ENCODE measurements at regions of chr12 and their contacts with region 1.

Region 1: DNA sequence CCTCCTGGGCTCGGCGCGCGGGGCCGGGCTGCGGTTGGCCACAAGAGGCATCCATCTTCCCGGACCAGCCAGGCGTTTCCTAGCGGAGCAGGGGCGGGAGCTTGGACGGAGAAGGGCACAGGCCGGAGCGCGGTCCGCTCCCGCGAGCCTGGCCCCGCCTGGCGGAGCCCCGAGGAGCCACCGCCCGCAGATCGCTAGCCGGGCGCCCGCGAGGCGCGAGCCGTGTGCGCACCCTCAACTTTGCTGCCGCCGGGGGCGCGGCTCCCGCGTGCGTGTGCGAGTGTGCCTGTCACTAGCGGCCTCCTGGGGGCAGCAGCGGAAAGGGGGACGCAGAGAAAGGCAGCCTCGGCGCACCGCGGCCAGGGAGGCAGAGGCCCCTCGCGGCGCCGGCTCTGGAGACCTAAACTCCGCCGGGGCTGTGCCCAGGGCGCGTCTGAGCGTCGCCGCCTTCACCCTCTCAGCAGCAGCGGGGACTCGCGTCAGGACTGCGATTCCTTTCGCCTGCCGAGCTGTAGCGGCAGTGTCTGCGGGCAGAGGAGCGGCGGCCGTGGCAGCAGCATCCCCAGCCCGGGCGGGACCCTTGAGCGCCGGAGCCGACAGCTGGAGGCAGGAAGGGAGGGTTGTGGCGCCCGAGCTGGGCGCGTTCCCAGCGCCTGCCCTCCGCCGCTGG is 644 bp upstream of the SRGAP1 start:
- DNase-seq: peak; percentile 87
- ATAC-seq: peak; percentile 93
- H3K4me3 ChIP-seq: peak overlapping the region; percentile 79 to 98 (median 91)
- H3K27ac ChIP-seq: peak overlapping the region; percentile 65
- H3K4me1 ChIP-seq: peaks cover 38% of the 10 kb centered on the region
- H3K27me3 ChIP-seq: no peaks in the 10 kb centered on the region; a peak in 1 of 5 replicates
- CTCF ChIP-seq: peak; percentile 97
- EP300 ChIP-seq: no peak
- POLR2A ChIP-seq: peak in 1 of 2 experiments; percentile 73; a peak in 2 of 4 replicates
- RAD21 ChIP-seq: peak; percentile 100

Region 2: DNA sequence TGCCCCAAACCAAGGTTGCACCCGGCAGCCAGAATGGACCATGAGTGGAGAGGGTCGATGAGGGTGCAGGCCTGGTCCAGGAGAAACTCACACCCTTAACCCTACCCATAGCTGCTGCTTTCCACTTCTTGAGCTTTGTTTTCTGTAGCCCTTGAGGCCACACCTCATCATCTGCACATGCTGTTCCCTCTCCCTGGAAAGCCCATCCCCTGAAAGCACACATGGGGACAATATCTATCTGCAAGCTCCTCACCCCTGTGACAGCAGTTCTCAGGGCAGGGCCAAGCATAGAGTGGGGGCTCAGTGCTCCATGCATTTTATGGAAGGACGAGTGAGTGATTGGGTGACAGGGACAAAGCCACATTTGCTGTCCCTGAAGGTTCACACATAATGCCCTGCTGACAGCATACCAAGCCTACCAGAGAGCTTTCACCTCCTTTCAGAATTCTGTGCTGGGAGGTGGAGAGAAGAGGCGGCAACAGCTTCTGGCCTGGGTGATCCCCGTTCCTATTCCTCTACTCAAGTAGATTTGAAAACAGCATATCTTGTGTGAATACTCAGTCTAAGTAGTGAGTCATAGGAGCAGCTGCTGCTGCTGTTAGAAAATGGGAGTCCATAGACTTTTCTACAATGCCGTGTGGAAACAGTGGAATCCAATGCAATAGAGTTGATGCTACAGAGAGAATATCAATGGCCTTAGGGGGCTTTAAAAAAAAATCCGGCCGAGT is 45.2 kb after region 1 on chr12:
- CTCF ChIA-PET with region 1: no interaction called
- POLR2A ChIA-PET with region 1: interaction called, 10 read pairs
- in situ Hi-C with region 1: no loop called
- intact Hi-C with region 1: loop called (anchors 5 kb)
- DNase-seq: no peak
- ATAC-seq: peak; percentile 27
- H3K4me3 ChIP-seq: no peak overlapping the region
- H3K27ac ChIP-seq: peak overlapping the region; percentile 39
- H3K4me1 ChIP-seq: peaks cover 46% of the 10 kb centered on the region
- H3K27me3 ChIP-seq: no peaks in the 10 kb centered on the region
- CTCF ChIP-seq: no peak
- EP300 ChIP-seq: no peak
- POLR2A ChIP-seq: no peak
- RAD21 ChIP-seq: no peak

Region 3: GRCh38 chr12:63940310-63941005 is 96.6 kb after region 1 on chr12:
- CTCF ChIA-PET with region 1: no interaction called
- POLR2A ChIA-PET with region 1: interaction called, 3 read pairs
- in situ Hi-C with region 1: no loop called
- intact Hi-C with region 1: loop called (anchors 10 kb)
- DNase-seq: no peak
- ATAC-seq: no peak
- H3K4me3 ChIP-seq: no peak overlapping the region
- H3K27ac ChIP-seq: no peak overlapping the region
- H3K4me1 ChIP-seq: peaks cover 44% of the 10 kb centered on the region
- H3K27me3 ChIP-seq: no peaks in the 10 kb centered on the region
- CTCF ChIP-seq: no peak
- EP300 ChIP-seq: no peak
- POLR2A ChIP-seq: no peak
- RAD21 ChIP-seq: no peak

Region 4: DNA sequence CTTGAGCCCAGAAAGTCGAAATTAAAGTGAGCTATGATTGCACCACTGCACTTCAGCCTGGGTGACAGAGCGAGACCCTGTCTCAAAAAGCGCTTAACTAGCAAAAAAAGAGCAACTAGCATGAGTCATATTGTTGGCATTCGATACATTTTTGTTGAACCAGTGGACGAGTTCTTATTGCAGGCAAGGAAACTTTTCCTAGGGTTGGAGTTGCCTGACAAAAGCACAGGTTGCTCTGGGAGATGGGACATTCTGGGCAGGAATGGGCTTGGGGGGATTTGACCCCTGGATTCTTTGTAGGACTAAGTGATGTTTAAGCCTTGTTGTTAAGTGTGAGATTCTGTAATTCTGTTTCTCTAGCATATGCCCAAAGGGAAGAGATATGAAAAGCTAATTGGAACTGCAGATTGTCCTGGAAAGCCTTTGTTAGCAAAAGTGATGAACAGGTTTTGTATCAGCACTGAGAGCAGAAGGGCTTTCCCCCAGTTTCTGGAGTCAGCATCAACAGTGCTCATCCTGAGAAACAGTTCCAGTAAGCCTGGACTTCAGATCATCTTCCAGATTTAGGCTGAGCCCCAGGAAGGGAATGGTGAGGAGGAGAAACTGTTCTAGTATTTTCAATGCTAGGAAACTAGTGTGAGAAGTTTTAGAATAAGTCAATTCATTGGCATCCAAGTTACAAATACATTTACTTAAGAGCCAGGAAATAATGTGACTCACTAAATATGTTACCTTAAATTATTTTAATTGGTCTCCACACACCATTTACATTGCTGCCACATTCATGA is 123.7 kb after region 1 on chr12:
- CTCF ChIA-PET with region 1: no interaction called
- POLR2A ChIA-PET with region 1: no interaction called
- in situ Hi-C with region 1: no loop called
- intact Hi-C with region 1: no loop called
- DNase-seq: no peak
- ATAC-seq: no peak
- H3K4me3 ChIP-seq: no peak overlapping the region
- H3K27ac ChIP-seq: no peak overlapping the region
- H3K4me1 ChIP-seq: no peaks in the 10 kb centered on the region
- H3K27me3 ChIP-seq: no peaks in the 10 kb centered on the region
- CTCF ChIP-seq: no peak
- EP300 ChIP-seq: no peak
- POLR2A ChIP-seq: no peak
- RAD21 ChIP-seq: no peak

Region 5: DNA sequence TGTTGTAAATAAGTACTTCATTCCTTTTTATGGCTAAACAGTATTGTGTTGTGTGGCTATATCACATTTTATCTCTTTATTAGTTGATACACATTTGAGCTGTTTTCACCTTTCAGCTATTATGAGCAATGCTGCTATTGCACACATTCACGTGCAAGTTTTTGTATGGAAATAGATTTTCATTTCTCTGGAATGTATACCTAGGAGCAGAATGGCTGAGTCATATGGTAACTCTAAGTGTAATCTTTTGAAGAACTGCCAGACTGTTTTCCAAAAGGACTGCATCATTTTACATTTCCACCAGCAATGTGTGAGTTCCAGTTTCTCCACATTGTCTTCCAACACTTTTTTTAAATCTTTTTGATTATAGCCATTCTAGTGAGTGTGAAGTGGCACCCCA is 134.7 kb after region 1 on chr12:
- CTCF ChIA-PET with region 1: no interaction called
- POLR2A ChIA-PET with region 1: no interaction called
- in situ Hi-C with region 1: no loop called
- intact Hi-C with region 1: no loop called
- DNase-seq: peak; percentile 4
- ATAC-seq: no peak
- H3K4me3 ChIP-seq: no peak overlapping the region
- H3K27ac ChIP-seq: no peak overlapping the region
- H3K4me1 ChIP-seq: no peaks in the 10 kb centered on the region
- H3K27me3 ChIP-seq: no peaks in the 10 kb centered on the region
- CTCF ChIP-seq: no peak
- EP300 ChIP-seq: no peak
- POLR2A ChIP-seq: no peak
- RAD21 ChIP-seq: no peak

Region 6: DNA sequence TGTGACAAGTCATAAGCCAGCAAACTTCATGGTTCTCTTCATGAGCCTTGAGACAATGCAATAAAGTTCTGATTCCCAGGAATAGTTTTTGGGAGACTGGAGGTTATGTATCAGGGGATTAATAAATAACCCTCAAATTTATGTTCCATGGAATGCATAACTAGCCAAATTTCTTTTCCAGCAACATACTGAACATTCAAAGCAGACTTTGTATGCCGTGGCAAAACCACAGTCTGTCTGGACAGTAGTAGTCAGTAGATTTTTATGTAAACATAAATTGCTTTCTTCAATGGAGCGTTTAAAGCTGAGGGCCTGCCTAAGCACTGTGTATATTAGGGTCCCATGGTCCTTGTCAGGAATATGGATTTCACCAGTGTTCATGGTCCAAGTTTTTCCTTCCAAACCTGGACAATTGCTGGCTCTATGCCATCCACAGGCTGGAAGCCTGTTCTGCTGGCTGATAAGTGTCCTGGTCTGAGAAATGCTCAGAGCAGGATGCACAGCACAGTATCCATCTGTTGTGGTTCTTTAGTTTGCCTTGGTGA is 145.5 kb after region 1 on chr12:
- CTCF ChIA-PET with region 1: no interaction called
- POLR2A ChIA-PET with region 1: no interaction called
- in situ Hi-C with region 1: no loop called
- intact Hi-C with region 1: no loop called
- DNase-seq: peak; percentile 55
- ATAC-seq: peak; percentile 72
- H3K4me3 ChIP-seq: no peak overlapping the region
- H3K27ac ChIP-seq: no peak overlapping the region
- H3K4me1 ChIP-seq: peaks cover 12% of the 10 kb centered on the region
- H3K27me3 ChIP-seq: no peaks in the 10 kb centered on the region
- CTCF ChIP-seq: no peak
- EP300 ChIP-seq: no peak
- POLR2A ChIP-seq: no peak
- RAD21 ChIP-seq: no peak

Region 7: GRCh38 chr12:64077922-64078321 is 234.1 kb after region 1 on chr12:
- CTCF ChIA-PET with region 1: no interaction called
- POLR2A ChIA-PET with region 1: no interaction called
- in situ Hi-C with region 1: no loop called
- intact Hi-C with region 1: loop called (anchors 1 kb)
- DNase-seq: peak; percentile 6
- ATAC-seq: peak; percentile 52; the same call in 1 of the 3 replicates
- H3K4me3 ChIP-seq: no peak overlapping the region
- H3K27ac ChIP-seq: no peak overlapping the region
- H3K4me1 ChIP-seq: no peaks in the 10 kb centered on the region
- H3K27me3 ChIP-seq: no peaks in the 10 kb centered on the region
- CTCF ChIP-seq: no peak
- EP300 ChIP-seq: no peak
- POLR2A ChIP-seq: no peak
- RAD21 ChIP-seq: no peak

Region 8: GRCh38 chr12:64222009-64222765 is 378.3 kb after region 1 on chr12 and contains the start of gene KICS2:
- CTCF ChIA-PET with region 1: no interaction called
- POLR2A ChIA-PET with region 1: interaction called, 12 read pairs
- in situ Hi-C with region 1: no loop called
- intact Hi-C with region 1: no loop called
- DNase-seq: peak; percentile 82
- ATAC-seq: peak; percentile 96
- H3K4me3 ChIP-seq: peak within 1 kb of the TSS; percentile 62 to 92 (median 86)
- H3K27ac ChIP-seq: peak within 1 kb of the TSS; percentile 78
- H3K4me1 ChIP-seq: peaks cover 20% of the 10 kb centered on the region
- H3K27me3 ChIP-seq: no peaks in the 10 kb centered on the region
- CTCF ChIP-seq: peak; percentile 24; the same call in 1 of the 2 replicates
- EP300 ChIP-seq: no peak
- POLR2A ChIP-seq: peak; percentile 88 to 91
- RAD21 ChIP-seq: peak; percentile 26; the same call in 1 of the 2 replicates
- total RNA-seq, gene KICS2: 6.6 and 6.8 TPM in 2 replicates

Region 9: DNA sequence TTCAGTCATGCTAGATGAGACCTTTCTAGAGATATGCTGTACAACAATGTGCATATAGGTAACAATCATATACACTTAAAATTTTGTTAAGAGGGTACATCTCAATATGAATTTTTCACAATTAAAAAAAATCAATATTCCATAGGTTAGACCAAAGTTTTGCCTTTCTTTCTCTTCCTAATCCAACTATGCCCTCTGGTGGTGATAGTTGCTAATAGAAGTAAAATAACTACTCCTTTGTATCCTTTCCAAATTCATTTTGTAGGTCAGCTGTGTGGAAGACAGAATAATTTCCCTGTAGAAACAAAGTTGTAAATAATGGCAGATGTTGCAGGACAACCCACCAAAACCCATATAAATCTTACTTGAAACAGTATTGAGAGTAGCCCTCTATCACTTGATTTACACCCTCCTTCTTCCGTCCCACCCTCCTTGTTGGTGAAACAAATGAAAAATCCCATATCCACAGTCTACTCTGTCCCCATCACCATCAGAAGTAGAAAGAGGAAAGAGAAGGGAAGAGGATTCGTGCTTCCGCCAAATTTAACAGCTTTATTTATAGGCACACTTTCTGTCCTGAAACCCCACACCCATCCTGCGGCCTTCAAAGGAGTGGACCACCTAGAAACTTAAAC is 412.4 kb after region 1 on chr12:
- CTCF ChIA-PET with region 1: interaction called, 48 read pairs
- POLR2A ChIA-PET with region 1: interaction called, 3 read pairs
- in situ Hi-C with region 1: loop called (anchors 5 kb)
- intact Hi-C with region 1: loop called (anchors 1 kb)
- DNase-seq: peak; percentile 49
- ATAC-seq: no peak
- H3K4me3 ChIP-seq: no peak overlapping the region
- H3K27ac ChIP-seq: no peak overlapping the region
- H3K4me1 ChIP-seq: no peaks in the 10 kb centered on the region
- H3K27me3 ChIP-seq: no peaks in the 10 kb centered on the region
- CTCF ChIP-seq: peak; percentile 69
- EP300 ChIP-seq: no peak
- POLR2A ChIP-seq: no peak
- RAD21 ChIP-seq: peak; percentile 61; the same call in 1 of the 2 replicates

Measured in HepG2 (cell line).